Sciatic nerve (tissue), 2 donors: ENCODE measurements at regions of chr16 and their contacts with region 1.

Region 1: GRCh38 chr16:53509906-53510703 is 7.1 kb upstream of the AKTIP start:
- DNase-seq: peak; percentile 78
- ATAC-seq: peak; percentile 90

Region 2: DNA sequence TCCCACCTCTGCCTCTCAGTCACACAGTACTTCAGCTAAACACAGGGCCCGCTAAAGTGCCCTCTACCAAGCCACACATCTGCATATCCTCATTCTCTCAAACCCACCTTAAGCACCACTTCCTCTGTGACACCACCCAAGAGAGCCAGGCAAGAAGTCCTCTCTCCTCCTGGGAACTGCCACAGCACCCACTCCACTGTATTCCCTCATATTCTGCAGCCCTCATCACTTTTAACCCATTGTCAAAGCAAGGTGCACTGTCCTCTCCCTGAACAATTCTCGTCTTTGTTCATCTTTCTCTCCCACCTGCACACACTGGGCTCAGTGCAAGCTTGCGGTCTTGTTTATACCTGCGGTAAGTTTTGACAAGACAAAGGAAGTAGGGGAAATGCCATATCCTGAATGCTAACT is 441.7 kb before region 1 on chr16:
- intact Hi-C with region 1: loop called (anchors 5 kb)
- DNase-seq: no peak
- ATAC-seq: no peak

Region 3: DNA sequence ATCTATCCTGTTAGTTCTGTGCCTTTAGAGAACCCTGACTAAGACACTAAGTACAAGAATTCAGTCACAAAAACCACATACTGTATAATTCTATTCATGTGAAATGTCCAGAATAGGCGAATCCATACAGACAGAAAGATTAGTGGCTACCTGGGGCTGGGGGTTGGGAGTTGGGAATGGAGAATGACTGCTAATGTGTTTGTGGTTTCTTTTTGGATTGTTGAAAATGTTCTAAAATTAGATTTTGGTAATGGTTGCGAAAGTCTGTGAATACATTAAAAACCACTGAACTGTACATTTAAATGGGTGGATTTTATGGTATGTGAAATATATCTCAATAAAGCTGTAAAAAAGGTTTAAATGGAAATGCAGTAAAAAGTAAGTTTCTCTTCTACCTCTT is 73.3 kb after region 1 on chr16:
- intact Hi-C with region 1: no loop called
- DNase-seq: no peak
- ATAC-seq: no peak